ENCODE measurements at regions of chr4 and their contacts with region 1.

Region 1: DNA sequence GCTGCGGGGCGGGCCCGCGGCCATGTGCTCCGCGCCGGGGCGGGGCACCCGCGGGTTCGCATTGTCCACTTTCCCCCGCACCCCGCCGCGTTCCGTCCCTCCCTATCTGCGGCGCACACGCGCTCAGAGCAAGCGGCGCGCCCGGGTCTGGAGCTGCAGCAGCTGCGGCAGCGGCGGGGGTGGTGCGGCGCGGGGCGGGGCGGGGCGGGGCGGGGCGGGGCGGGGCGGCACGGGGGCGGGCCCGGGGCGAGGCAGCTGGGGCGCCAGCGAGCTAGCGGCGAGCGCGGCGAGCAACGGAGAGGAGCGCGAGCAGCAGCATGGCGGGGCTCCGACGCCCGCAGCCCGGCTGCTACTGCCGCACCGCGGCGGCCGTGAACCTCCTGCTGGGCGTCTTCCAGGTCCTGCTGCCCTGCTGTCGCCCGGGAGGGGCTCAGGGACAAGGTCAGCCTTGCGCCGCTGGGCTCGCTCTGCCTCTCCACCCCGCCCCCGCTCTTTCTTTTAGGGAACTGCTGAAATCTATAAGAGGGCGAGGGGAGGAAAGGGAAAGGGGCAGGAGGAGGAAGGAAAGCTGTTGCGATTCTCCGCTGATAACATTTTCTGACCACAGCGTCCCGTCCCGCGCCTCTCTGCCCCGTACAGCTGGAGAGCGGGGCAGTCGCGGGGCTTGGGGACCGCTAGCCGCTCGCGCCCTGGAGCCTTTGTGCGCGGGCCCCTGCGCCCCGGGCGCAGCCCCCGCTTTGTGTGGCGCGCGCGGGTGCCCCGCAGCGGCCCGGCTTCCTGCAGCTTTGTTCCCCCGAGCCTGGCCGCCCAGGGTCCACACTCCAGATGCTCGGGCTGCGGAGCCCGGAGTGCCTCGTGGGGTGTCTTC is at the start of gene TMEM131L:
- DNase-seq: peak; percentile 59 to 77 (median 71)
- ATAC-seq: peak; percentile 76 to 78
- H3K4me3 Mint-ChIP-seq: peak within 1 kb of the TSS; percentile 93 to 98 (median 97)
- H3K27ac Mint-ChIP-seq: peak within 1 kb of the TSS; percentile 92 to 99 (median 97)
- H3K4me1 Mint-ChIP-seq: peaks cover 22 to 53% (median 43%) of the 10 kb centered on the region in 4 donors
- H3K27me3 Mint-ChIP-seq: no peaks in the 10 kb centered on the region
- polyA plus RNA-seq, gene TMEM131L: 13.8 to 32.9 (median 26.7) TPM

Region 2: DNA sequence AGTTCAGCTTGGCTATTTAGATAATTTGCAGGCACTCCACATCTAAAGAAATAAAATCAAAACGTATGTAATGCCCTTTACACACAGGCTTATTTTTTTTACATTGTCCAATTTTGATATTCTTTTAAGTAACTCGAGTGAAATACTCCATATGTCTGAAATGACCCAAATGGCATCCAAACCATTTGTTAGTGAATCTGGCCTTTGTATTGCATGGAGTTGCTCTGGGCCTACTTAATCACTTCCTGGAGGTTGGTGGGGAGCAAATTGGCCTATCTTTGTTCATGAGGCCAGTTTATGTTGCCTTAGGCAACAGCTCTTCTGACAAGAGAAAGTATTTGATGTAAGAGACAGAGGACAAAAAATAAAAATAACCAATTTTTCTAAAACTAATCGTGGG is 47.8 kb before region 1 on chr4:
- POLR2A ChIA-PET with region 1: no interaction called
- DNase-seq: no peak
- ATAC-seq: no peak
- H3K4me3 Mint-ChIP-seq: no peak overlapping the region
- H3K27ac Mint-ChIP-seq: peak overlapping the region in 6 of 10 donors; percentile 4 to 48 (median 8)
- H3K4me1 Mint-ChIP-seq: peaks cover 0 to 11% (median 7%) of the 10 kb centered on the region in 4 donors
- H3K27me3 Mint-ChIP-seq: no peaks in the 10 kb centered on the region

Region 3: DNA sequence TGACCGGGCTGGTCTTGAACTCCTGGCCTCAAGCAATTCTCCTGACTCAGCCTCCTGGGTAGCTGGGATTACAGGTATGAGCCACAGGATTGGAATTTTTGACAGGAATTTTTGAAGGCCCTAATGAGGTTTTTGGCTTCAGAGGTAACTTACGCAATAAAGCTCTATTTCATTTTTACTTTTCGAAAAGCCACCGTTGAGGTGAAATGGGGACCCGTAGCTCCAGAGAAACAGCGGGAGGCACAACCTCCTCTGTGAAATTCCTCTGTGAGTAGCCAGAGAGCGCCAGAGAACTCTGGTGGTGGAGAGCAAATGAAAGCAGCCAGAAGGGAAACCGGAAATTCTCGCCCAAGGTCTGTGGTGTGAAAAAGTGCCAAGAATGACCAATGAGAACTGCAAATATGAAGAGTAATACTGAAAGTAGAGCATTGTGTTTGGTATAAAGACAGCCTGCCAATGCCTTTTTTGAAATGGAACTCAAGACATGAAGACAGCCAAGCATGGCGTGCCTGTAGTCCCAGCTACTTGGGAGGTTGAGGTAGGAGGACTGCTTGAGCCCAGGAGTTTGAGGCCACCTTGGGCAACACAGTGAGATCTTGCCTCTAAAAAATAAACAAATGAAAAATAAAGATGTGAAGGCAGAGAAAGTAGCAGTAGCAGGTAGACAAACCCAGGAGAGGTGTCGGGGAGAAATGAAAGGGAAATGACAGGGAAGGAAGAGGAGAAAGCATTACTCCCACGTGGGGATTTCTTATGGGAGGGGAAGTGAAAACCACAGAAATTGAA is 33.2 kb before region 1 on chr4:
- POLR2A ChIA-PET with region 1: interaction called, 31 read pairs
- DNase-seq: peak in 9 of 10 donors; percentile 15 to 75 (median 43)
- ATAC-seq: peak; percentile 52 to 68
- H3K4me3 Mint-ChIP-seq: peak overlapping the region; percentile 68 to 96 (median 86)
- H3K27ac Mint-ChIP-seq: peak overlapping the region; percentile 85 to 99 (median 93)
- H3K4me1 Mint-ChIP-seq: peaks cover 27 to 84% (median 69%) of the 10 kb centered on the region in 4 donors
- H3K27me3 Mint-ChIP-seq: no peaks in the 10 kb centered on the region

Region 4: DNA sequence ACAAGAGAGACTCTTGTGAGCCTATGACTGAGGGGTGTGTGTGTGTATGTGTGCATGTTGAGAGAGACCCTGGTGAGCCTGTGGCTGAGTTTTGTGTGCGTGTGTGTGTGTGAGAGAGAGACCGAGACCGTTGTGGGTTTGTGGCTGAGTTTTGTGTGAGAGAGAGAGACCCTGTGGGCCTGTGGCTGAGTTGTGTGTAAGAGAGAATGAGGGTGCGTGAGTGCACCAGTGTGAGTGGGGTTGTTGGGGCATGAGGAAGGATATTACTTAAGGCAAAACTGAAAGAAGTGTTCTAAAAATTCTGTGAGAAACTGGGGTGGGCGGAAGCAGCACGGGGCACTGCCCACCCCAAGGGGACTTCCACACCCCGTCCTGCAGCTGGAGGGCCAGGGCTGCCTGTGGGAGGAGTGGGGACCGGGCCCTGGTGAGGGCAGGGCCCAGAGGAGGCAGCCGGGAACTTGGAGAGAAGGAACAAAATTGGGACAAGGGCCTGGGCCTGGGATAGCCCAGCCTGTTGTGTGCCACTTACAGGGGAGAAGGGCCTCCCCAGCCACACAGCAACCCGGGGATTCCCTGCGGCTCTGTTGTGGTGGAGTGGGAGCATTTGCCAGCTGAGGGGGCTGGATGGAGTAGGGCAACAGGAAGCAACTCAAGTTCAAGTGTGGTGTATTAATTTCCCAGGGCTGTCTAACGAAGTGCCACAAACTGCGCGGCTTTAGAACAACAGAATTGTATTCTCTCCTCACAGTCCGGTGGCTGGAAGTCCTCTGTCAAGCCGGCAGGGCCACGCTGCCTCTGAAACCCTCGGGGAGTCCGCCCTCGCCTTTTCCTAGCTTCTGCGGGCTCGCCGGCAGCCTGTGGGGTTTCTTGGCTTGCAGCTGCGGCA is 21.9 kb after region 1 on chr4:
- POLR2A ChIA-PET with region 1: interaction called, 93 read pairs
- DNase-seq: peak; percentile 51 to 88 (median 82)
- ATAC-seq: peak; percentile 70 to 82
- H3K4me3 Mint-ChIP-seq: peak overlapping the region; percentile 72 to 98 (median 88)
- H3K27ac Mint-ChIP-seq: peak overlapping the region; percentile 91 to 100 (median 97)
- H3K4me1 Mint-ChIP-seq: peaks cover 47 to 89% (median 80%) of the 10 kb centered on the region in 4 donors
- H3K27me3 Mint-ChIP-seq: no peaks in the 10 kb centered on the region

Region 5: DNA sequence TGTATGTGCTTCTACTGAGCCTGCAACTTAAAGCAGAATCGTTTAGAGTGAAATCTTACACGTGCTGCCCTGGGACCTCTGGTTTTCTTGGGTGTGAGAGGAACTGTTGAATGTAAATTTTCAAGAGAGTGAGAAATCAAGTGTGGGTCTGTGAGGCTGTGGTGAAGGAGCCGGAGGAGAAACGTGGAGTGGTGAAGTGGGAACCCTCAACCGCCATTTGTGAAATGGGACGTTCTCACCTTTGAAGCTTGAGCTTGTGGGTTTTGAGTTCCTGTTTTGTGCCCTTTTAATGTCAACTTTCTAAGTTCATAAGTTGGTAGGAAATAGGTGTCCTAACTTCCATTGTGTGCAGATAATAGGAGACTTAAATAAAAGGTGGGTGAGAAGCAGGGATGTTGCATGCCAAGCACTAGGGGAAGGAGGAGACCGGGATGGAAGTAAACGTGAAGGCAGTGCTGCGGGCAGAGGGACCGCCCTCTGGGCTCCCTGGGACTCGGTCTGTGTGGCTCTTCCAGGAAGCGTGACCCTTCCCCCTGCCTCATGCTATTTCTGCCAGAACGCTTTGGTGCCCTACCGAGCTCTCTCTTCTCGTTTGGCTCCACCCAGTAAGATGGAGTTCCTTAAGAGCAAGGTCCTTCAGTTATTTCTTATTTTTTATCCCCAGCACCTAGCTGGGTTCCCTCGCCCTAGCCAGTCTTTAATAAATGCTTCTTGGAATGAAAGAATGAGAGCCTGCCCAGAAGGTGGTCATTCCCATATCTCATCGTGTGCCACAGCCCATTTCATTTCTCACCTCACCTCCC is 55.9 kb after region 1 on chr4:
- POLR2A ChIA-PET with region 1: interaction called, 65 read pairs
- DNase-seq: peak; percentile 28 to 81 (median 58)
- ATAC-seq: peak; percentile 68 to 75
- H3K4me3 Mint-ChIP-seq: peak overlapping the region; percentile 64 to 89 (median 84)
- H3K27ac Mint-ChIP-seq: peak overlapping the region; percentile 83 to 97 (median 92)
- H3K4me1 Mint-ChIP-seq: peaks cover 56 to 99% (median 98%) of the 10 kb centered on the region in 4 donors
- H3K27me3 Mint-ChIP-seq: no peaks in the 10 kb centered on the region

Region 6: DNA sequence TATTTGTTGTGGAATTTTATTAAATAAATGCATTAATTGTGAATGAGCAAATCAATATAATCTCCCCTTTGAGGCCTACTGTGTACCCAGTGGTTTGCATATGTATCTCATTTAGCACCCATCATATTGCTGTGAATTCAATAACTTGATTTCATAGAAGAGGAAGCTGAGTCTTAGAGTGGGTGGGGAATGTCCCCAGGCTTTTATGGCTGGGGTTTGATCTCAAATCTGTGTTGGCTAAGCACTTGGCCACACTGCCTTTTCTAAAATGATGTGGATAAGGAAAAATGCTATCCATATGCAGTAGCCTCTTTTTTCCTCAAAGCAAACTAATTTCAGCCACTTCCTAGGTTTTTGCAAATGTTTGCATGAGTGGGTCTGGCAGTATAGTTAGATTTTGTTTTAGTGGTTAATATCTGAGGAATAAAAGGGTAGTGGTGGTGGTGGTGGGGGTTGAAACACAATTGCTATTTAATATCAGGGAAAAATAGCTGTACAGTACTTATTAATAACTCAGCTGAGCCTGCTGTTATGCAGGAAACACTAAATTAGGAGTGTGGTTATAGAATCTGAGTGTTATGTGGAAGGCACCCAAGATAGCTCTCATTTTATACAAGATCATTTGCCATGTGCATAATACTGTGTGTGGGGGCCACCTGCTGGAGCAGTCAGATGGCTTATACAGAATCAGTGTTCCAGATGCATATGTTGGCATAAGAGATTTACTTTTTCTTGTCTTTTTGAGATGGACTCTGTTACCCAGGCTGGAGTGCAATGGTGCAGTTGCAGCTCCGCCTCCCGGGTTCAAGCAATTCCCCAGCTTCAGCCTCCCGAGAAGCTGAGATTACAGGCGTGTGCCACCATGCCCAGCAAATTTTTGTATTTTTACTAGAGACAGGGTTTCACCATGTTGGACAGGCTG is 107.8 kb after region 1 on chr4:
- POLR2A ChIA-PET with region 1: interaction called, 15 read pairs
- DNase-seq: peak; percentile 35 to 86 (median 62)
- ATAC-seq: peak; percentile 93
- H3K4me3 Mint-ChIP-seq: peak overlapping the region in 8 of 10 donors; percentile 3 to 66 (median 50)
- H3K27ac Mint-ChIP-seq: peak overlapping the region in 9 of 10 donors; percentile 44 to 87 (median 79)
- H3K4me1 Mint-ChIP-seq: peaks cover 33 to 74% (median 66%) of the 10 kb centered on the region in 4 donors
- H3K27me3 Mint-ChIP-seq: no peaks in the 10 kb centered on the region